B cell (primary cell): ENCODE measurements at regions of chr12 and their contacts with region 1.

Region 1: DNA sequence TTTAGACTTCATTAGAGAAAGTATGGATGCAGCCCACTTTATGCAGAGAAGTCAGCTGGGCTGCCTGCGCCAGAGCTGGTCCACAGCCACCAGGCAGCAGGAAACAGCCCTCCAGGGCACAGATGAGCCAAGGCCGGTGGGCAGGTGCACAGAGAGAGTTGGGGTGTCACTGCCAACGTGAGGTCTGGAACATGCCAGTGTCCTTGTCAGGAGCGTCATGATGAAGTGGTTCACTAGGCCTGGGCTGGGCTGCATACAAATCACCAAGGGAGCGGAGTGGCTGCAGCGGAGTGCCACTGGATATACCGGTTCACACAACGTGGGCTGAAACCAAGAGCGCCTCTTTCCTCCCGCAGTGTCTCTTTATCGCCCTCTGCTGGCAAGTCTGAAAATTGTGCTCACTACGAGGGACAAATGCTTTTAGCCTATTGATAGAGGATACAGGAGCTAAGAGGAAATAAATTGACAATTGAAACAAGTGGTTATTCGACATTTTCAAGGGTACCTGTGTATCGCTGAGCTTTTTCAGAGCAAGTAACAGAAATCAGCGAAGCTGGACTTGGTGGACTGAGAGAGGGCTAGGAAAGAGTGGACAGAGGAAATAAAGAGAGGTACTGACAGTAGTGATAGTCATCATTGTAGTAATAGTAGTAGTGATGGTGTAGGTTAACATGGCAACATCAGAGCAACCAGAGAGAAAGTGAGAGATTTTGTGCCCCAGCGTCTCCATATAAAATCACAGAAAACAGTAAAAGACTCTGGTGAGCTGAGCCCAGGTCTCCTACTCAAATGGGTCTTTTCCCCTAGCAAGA is 52.0 kb upstream of the ITPR2 start:
- DNase-seq: peak; percentile 89
- ATAC-seq: peak; percentile 96
- H3K4me3 ChIP-seq: peak overlapping the region in 2 of 5 experiments; percentile 3 to 26
- H3K4me3 Mint-ChIP-seq: peak overlapping the region; percentile 67
- H3K27ac ChIP-seq: no peak overlapping the region
- H3K27ac Mint-ChIP-seq: no peak overlapping the region
- H3K4me1 ChIP-seq: peaks cover 4 to 8% of the 10 kb centered on the region in 2 donors
- H3K4me1 Mint-ChIP-seq: peaks cover 9% of the 10 kb centered on the region
- H3K27me3 ChIP-seq: no peaks in the 10 kb centered on the region
- H3K27me3 Mint-ChIP-seq: no peaks in the 10 kb centered on the region
- CTCF ChIP-seq: peak; percentile 97

Region 2: GRCh38 chr12:24937553-24938244 is 1947.3 kb before region 1 on chr12:
- CTCF ChIA-PET with region 1: no interaction called
- POLR2A ChIA-PET with region 1: no interaction called
- intact Hi-C with region 1: no loop called
- DNase-seq: no peak
- ATAC-seq: no peak
- H3K4me3 ChIP-seq: no peak overlapping the region
- H3K4me3 Mint-ChIP-seq: no peak overlapping the region
- H3K27ac ChIP-seq: no peak overlapping the region
- H3K27ac Mint-ChIP-seq: no peak overlapping the region
- H3K4me1 ChIP-seq: no peaks in the 10 kb centered on the region
- H3K4me1 Mint-ChIP-seq: peaks cover 3% of the 10 kb centered on the region
- H3K27me3 ChIP-seq: no peaks in the 10 kb centered on the region
- H3K27me3 Mint-ChIP-seq: no peaks in the 10 kb centered on the region
- CTCF ChIP-seq: no peak

Region 3: DNA sequence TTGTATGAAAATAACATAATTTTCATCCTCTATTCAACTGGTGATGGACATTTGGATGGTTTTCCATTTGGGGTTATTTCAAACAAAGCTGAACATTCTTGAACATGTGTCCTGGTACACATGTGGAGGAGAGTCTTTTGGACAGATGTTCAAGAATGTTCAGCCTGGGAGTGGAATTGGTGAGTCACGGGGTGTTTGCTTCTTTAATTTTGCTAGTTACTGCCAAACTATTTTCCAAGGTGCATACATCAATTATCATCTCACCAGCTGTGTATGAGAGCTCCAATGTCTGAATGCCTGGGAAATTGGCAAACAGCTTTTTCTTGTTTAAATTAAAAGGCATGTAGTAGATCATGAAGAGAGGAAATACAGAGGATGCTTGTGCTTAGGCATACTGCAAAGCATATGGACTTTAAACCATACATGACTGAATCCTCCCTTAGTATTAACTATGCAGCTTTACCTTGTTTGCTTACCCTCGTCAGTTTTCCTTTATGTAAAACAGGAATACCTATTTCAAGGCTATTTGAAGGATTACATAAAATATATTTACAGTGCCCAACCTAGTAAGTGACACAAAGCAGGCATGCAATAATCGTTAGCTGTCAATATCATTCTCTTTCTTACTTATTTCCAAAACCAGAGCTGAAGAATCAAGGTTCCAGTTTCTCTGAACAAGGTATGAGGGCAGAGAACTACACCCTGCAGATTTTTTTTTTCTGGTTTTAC is 204.1 kb before region 1 on chr12:
- CTCF ChIA-PET with region 1: no interaction called
- POLR2A ChIA-PET with region 1: no interaction called
- intact Hi-C with region 1: no loop called
- DNase-seq: no peak
- ATAC-seq: no peak
- H3K4me3 ChIP-seq: no peak overlapping the region
- H3K4me3 Mint-ChIP-seq: no peak overlapping the region
- H3K27ac ChIP-seq: no peak overlapping the region
- H3K27ac Mint-ChIP-seq: no peak overlapping the region
- H3K4me1 ChIP-seq: no peaks in the 10 kb centered on the region
- H3K4me1 Mint-ChIP-seq: no peaks in the 10 kb centered on the region
- H3K27me3 ChIP-seq: no peaks in the 10 kb centered on the region
- H3K27me3 Mint-ChIP-seq: no peaks in the 10 kb centered on the region
- CTCF ChIP-seq: no peak

Region 4: GRCh38 chr12:26870491-26871419 is 14.2 kb before region 1 on chr12:
- CTCF ChIA-PET with region 1: interaction called, 19 read pairs
- POLR2A ChIA-PET with region 1: no interaction called
- intact Hi-C with region 1: no loop called
- DNase-seq: no peak
- ATAC-seq: no peak
- H3K4me3 ChIP-seq: no peak overlapping the region
- H3K4me3 Mint-ChIP-seq: no peak overlapping the region
- H3K27ac ChIP-seq: no peak overlapping the region
- H3K27ac Mint-ChIP-seq: no peak overlapping the region
- H3K4me1 ChIP-seq: no peaks in the 10 kb centered on the region
- H3K4me1 Mint-ChIP-seq: peaks cover 11% of the 10 kb centered on the region
- H3K27me3 ChIP-seq: no peaks in the 10 kb centered on the region
- H3K27me3 Mint-ChIP-seq: no peaks in the 10 kb centered on the region
- CTCF ChIP-seq: no peak

Region 5: GRCh38 chr12:26896913-26897312 is 11.9 kb after region 1 on chr12:
- CTCF ChIA-PET with region 1: interaction called, 17 read pairs
- POLR2A ChIA-PET with region 1: no interaction called
- intact Hi-C with region 1: no loop called
- DNase-seq: no peak
- ATAC-seq: no peak
- H3K4me3 ChIP-seq: no peak overlapping the region
- H3K4me3 Mint-ChIP-seq: no peak overlapping the region
- H3K27ac ChIP-seq: no peak overlapping the region
- H3K27ac Mint-ChIP-seq: no peak overlapping the region
- H3K4me1 ChIP-seq: no peaks in the 10 kb centered on the region
- H3K4me1 Mint-ChIP-seq: no peaks in the 10 kb centered on the region
- H3K27me3 ChIP-seq: no peaks in the 10 kb centered on the region
- H3K27me3 Mint-ChIP-seq: no peaks in the 10 kb centered on the region
- CTCF ChIP-seq: no peak